ENCODE measurements at regions of chr9 and their contacts with region 1.

Region 1: DNA sequence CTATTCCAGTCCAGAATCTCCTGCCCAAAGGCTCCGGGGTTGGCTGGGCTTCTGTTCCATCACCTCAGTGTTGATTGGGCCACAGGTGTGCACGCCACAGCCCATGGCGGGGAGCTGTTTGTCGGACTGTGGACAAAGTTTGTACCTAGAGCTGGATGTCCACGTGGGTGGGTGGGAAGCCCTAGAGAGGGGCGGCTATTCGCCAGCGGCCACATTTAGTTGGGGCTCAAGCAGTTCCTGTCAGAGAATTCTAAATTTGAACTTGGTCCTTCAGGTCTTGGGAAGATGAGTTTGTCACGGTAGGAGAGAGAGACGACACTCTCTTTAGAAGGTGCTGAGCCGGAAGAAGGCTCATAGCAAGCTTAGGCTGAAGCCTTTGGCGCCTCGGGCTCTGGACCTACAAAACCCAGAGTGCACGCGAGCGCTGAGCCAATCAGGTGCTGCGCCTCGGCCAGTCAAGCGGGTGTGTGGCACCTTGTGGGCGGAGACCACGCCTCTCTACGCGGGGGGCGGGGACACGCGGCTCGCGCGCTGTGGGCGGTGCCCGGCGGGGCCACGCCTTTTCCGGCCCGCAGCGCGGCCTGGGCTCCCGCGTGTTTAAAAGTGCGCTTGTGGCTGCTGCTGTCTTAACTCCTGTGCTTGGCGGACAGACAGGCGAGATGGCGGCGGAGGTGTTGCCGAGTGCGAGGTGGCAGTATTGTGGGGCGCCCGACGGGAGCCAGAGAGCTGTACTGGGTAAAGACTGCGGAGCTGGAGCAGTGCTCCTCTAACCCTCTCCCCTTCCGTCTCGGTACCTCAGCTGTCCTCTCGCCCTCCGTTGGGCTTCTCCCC is at the start of gene POLR1E:
- DNase-seq: peak; percentile 93 to 96 (median 95)
- H3K4me3 ChIP-seq: peak within 1 kb of the TSS; percentile 84
- H3K27ac ChIP-seq: peak within 1 kb of the TSS in 1 of 2 donors; percentile 59
- H3K4me1 ChIP-seq: peaks cover 9% of the 10 kb centered on the region
- H3K27me3 ChIP-seq: no peaks in the 10 kb centered on the region
- CTCF ChIP-seq: no peak
- EP300 ChIP-seq: no peak
- POLR2A ChIP-seq: peak; percentile 73
- total RNA-seq, gene POLR1E: 26.3 to 45.8 (median 38.0) TPM

Region 2: GRCh38 chr9:37329576-37329975 is 156.0 kb before region 1 on chr9:
- intact Hi-C with region 1: no loop called
- DNase-seq: no peak
- H3K4me3 ChIP-seq: no peak overlapping the region
- H3K27ac ChIP-seq: no peak overlapping the region
- H3K4me1 ChIP-seq: no peaks in the 10 kb centered on the region
- H3K27me3 ChIP-seq: no peaks in the 10 kb centered on the region
- CTCF ChIP-seq: no peak
- EP300 ChIP-seq: no peak
- POLR2A ChIP-seq: no peak

Region 3: GRCh38 chr9:37415011-37415719 is 70.4 kb before region 1 on chr9:
- intact Hi-C with region 1: loop called in 1 of 4 experiments (anchors 2 kb)
- DNase-seq: peak; percentile 49 to 73 (median 67)
- H3K4me3 ChIP-seq: no peak overlapping the region
- H3K27ac ChIP-seq: no peak overlapping the region
- H3K4me1 ChIP-seq: no peaks in the 10 kb centered on the region
- H3K27me3 ChIP-seq: no peaks in the 10 kb centered on the region
- CTCF ChIP-seq: peak; percentile 64 to 76 (median 69)
- EP300 ChIP-seq: no peak
- POLR2A ChIP-seq: no peak

Region 4: GRCh38 chr9:37425301-37425752 is 60.3 kb before region 1 on chr9:
- intact Hi-C with region 1: no loop called
- DNase-seq: peak in 4 of 5 donors; percentile 33 to 65 (median 55)
- H3K4me3 ChIP-seq: no peak overlapping the region
- H3K27ac ChIP-seq: peak overlapping the region in 1 of 2 donors; percentile 0
- H3K4me1 ChIP-seq: peaks cover 24% of the 10 kb centered on the region
- H3K27me3 ChIP-seq: no peaks in the 10 kb centered on the region
- CTCF ChIP-seq: no peak
- EP300 ChIP-seq: no peak
- POLR2A ChIP-seq: no peak

Region 5: GRCh38 chr9:37575921-37576721 is 90.5 kb after region 1 on chr9 and contains the start of gene FBXO10:
- intact Hi-C with region 1: loop called in 1 of 4 experiments (anchors 5 kb)
- DNase-seq: peak; percentile 61 to 82 (median 70)
- H3K4me3 ChIP-seq: peak within 1 kb of the TSS; percentile 54
- H3K27ac ChIP-seq: peak within 1 kb of the TSS; percentile 25 to 53
- H3K4me1 ChIP-seq: peaks cover 4% of the 10 kb centered on the region
- H3K27me3 ChIP-seq: no peaks in the 10 kb centered on the region
- CTCF ChIP-seq: no peak
- EP300 ChIP-seq: no peak
- POLR2A ChIP-seq: no peak
- total RNA-seq, gene FBXO10: 3.0 to 7.2 (median 4.7) TPM

Region 6: DNA sequence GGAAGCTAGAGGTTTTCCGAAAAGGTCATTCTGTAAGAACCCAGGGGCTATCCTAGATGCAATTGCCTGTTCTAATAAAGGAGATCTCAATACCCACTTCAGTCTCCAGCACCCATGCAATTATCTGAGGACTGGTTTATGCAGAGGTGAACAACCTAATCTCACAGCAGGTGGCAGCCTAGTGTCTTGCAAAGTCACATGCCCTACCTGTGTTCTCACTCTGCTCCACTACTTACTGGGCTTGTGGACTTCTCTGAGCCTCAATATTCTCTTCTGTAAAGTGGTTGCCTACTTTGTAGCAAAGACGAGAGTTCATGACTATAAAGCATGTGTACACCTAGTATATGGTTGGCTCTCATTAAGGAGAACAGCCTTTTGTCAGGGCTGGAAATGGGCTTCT is 885.9 kb after region 1 on chr9:
- intact Hi-C with region 1: loop called in 1 of 4 experiments (anchors 10 kb)
- DNase-seq: peak in 1 of 5 donors; percentile 33
- H3K4me3 ChIP-seq: no peak overlapping the region
- H3K27ac ChIP-seq: no peak overlapping the region
- H3K4me1 ChIP-seq: peaks cover 6% of the 10 kb centered on the region
- H3K27me3 ChIP-seq: no peaks in the 10 kb centered on the region
- CTCF ChIP-seq: peak in 1 of 3 donors; percentile 14
- EP300 ChIP-seq: no peak
- POLR2A ChIP-seq: no peak

Measured in ovary (tissue), 10 donors.